ENCODE measurements at regions of chr11 and their contacts with region 1.

Region 1: DNA sequence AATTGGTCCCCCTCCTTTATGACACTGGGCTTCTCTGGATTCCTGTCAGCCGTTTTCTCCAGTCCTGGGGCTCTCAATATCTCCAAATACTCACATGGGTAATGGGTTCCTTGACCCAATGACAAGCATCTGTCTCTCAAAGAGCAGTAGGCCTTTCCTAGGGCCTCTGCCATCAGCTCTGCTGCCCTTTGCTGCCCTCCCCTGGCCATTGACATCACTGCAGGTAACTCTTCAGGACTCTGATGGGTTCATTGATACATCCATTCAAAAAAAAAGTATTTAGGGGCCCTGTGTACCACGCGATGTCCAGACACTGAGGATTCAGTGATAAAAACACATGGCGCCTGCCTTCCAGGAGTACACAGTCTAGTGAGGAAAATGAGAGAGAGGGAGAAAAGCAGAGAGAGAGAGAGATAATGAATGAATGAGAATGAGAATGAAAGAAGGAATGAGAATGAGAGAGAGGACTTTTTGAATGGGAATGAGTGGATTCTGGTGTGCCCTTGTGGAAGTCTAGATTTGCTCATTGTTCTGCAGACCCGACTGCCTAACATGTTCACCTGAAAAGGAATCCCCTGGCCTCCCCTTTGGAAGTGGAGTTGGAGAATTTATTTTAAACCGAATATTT is 42.6 kb upstream of the OLFML1 start:
- DNase-seq: peak; percentile 45
- H3K4me3 ChIP-seq: no peak overlapping the region
- H3K27ac ChIP-seq: no peak overlapping the region
- H3K4me1 ChIP-seq: no peaks in the 10 kb centered on the region
- H3K27me3 ChIP-seq: no peaks in the 10 kb centered on the region
- CTCF ChIP-seq: peak; percentile 42 to 78 (median 68)
- POLR2A ChIP-seq: no peak

Region 2: DNA sequence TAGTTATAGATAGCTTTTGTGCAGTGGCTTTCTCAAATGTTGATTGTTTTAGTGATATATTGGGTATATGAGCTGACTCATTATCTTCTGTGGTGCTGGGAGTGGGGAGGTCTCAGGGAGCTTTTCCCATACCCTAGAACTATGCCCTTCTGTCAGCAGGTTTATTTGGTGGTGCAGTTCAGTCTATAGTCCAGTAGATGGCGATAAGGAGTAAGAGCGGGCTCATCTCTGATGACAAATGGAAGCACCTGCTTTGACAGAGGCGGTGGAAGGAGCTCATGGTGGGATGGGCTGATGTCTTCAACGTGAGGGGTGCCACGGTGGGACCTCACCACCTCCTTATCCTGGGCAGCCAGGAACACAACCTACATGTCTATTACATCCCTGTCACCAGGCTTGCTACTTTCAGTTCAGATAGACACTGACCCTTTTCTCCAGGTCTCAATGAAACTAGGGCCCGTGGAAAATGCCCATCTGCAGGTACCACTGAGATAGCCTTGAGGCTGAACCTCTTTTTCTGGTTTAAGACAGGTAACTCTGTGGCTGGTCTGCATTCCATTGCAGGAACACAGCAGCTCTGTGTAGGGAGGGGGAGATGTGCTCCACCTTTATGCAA is 630.2 kb before region 1 on chr11:
- intact Hi-C with region 1: loop called (anchors 5 kb)
- DNase-seq: peak; percentile 6
- H3K4me3 ChIP-seq: no peak overlapping the region
- H3K27ac ChIP-seq: no peak overlapping the region
- H3K4me1 ChIP-seq: no peaks in the 10 kb centered on the region
- H3K27me3 ChIP-seq: no peaks in the 10 kb centered on the region
- CTCF ChIP-seq: peak; percentile 40 to 70 (median 57)
- POLR2A ChIP-seq: no peak

Region 3: GRCh38 chr11:7098235-7098832 is 344.4 kb before region 1 on chr11:
- intact Hi-C with region 1: loop called (anchors 5 kb)
- DNase-seq: no peak
- H3K4me3 ChIP-seq: no peak overlapping the region
- H3K27ac ChIP-seq: no peak overlapping the region
- H3K4me1 ChIP-seq: no peaks in the 10 kb centered on the region
- H3K27me3 ChIP-seq: no peaks in the 10 kb centered on the region
- CTCF ChIP-seq: peak in 3 of 4 experiments; percentile 35 to 65 (median 58)
- POLR2A ChIP-seq: no peak

Region 4: GRCh38 chr11:7143908-7144307 is 298.8 kb before region 1 on chr11:
- intact Hi-C with region 1: loop called (anchors 5 kb)
- DNase-seq: no peak
- H3K4me3 ChIP-seq: no peak overlapping the region
- H3K27ac ChIP-seq: no peak overlapping the region
- H3K4me1 ChIP-seq: no peaks in the 10 kb centered on the region
- H3K27me3 ChIP-seq: no peaks in the 10 kb centered on the region
- CTCF ChIP-seq: peak in 3 of 4 experiments; percentile 33 to 52 (median 35)
- POLR2A ChIP-seq: no peak

Region 5: GRCh38 chr11:7314811-7315604 is 127.7 kb before region 1 on chr11:
- intact Hi-C with region 1: no loop called
- DNase-seq: no peak
- H3K4me3 ChIP-seq: no peak overlapping the region
- H3K27ac ChIP-seq: no peak overlapping the region
- H3K4me1 ChIP-seq: no peaks in the 10 kb centered on the region
- H3K27me3 ChIP-seq: no peaks in the 10 kb centered on the region
- CTCF ChIP-seq: no peak
- POLR2A ChIP-seq: no peak

Region 6: GRCh38 chr11:7688238-7688826 is 245.6 kb after region 1 on chr11:
- intact Hi-C with region 1: loop called (anchors 5 kb)
- DNase-seq: no peak
- H3K4me3 ChIP-seq: no peak overlapping the region
- H3K27ac ChIP-seq: no peak overlapping the region
- H3K4me1 ChIP-seq: no peaks in the 10 kb centered on the region
- H3K27me3 ChIP-seq: no peaks in the 10 kb centered on the region
- CTCF ChIP-seq: peak; percentile 41 to 81 (median 73)
- POLR2A ChIP-seq: no peak